ENCODE measurements at regions of chr4 and their contacts with region 1.

Region 1: GRCh38 chr4:67746797-67747495 is 7.2 kb downstream of the GNRHR start:
- DNase-seq: no peak
- ATAC-seq: no peak
- H3K4me3 ChIP-seq: no peak overlapping the region
- H3K27ac ChIP-seq: no peak overlapping the region
- H3K4me1 ChIP-seq: no peaks in the 10 kb centered on the region
- H3K27me3 ChIP-seq: no peaks in the 10 kb centered on the region
- CTCF ChIP-seq: peak in 4 of 5 experiments; percentile 22 to 65 (median 40)
- POLR2A ChIP-seq: no peak

Region 2: GRCh38 chr4:67632492-67632891 is 114.5 kb before region 1 on chr4:
- in situ Hi-C with region 1: no loop called
- intact Hi-C with region 1: no loop called
- DNase-seq: no peak
- ATAC-seq: no peak
- H3K4me3 ChIP-seq: no peak overlapping the region
- H3K27ac ChIP-seq: no peak overlapping the region
- H3K4me1 ChIP-seq: no peaks in the 10 kb centered on the region
- H3K27me3 ChIP-seq: no peaks in the 10 kb centered on the region
- CTCF ChIP-seq: no peak
- POLR2A ChIP-seq: no peak

Region 3: DNA sequence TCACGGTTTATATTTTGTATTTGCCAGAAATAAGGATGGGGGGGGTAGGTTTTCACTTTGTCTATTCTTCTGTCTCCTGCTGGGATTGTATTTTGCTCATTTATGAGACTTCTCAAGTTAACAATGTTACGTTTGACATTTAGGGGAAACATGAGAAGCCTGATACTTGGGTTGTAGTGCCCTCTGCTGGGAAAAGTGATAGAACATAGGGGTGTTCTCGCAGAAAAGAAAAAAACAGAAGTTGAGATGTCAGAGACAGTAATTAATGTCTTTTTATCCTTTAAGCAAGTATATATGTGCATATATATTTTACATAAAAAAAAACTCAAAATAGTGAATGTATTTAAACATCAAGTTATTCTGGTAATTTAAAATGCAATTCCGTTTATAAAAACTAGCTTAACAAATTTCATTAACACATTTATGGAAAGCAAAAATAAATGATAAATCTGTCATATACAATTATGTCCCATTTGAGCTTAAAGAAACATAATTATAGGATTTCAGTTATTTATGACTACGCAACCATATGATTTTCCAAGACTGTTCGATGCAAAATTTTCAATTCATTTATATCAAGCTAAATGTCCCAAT is 428.7 kb after region 1 on chr4:
- in situ Hi-C with region 1: no loop called
- intact Hi-C with region 1: loop called (anchors 5 kb)
- DNase-seq: no peak
- ATAC-seq: no peak
- H3K4me3 ChIP-seq: no peak overlapping the region
- H3K27ac ChIP-seq: no peak overlapping the region
- H3K4me1 ChIP-seq: no peaks in the 10 kb centered on the region
- H3K27me3 ChIP-seq: no peaks in the 10 kb centered on the region
- CTCF ChIP-seq: peak in 1 of 5 experiments; percentile 16
- POLR2A ChIP-seq: no peak

Measured in gastrocnemius medialis (tissue), 4 donors.